Left cardiac atrium (tissue), 4 donors: ENCODE measurements at regions of chr5 and their contacts with region 1.

Region 1: DNA sequence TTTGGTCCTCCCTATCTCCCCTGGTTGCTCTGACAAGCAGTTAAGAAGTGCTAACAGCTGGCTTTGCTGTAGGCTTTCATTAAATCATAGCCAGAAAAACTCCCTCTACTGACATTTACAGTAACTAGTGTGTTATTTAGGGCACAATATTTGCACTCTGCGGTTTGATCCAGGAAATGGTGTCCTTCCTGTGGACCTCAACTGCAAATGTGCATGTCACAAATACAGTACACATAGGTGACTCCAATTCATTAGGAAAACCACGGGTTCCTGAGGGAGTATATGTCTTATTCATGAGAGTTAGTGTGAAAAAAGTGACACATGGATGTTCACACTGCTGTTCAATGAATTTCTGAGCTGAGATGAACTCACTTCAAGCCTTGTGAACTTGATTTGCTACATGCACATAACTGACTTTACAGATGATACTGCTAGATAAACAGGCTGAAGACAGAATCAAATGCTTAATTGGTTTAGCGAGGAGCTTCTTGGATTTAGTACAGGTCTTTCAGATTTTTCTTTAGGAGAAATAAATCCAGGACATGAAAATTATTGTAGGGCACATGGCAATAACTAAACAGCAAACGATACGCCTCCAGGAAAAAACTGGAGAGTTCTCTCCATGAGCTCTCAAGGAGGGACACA is 281.5 kb downstream of the EFNA5 start:
- DNase-seq: no peak
- ATAC-seq: peak; percentile 72 to 77

Region 2: DNA sequence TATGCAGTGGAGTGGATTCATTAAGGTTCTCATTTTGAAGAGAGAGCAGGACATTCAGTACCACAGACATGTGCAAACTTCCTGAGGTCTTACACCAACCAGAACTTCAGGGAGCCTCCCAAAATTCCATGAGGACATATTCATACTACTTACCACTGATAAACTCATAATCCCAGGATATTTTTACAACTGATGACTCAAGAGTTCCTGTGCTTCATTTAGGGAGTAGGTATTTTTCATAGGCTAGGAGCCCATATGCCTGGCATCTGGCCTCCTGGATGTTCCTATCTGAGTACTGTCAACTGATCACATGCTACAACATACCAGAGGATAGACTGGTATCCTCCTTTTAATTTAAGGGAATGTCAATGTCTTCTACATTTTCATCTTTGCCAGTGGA is 296.6 kb before region 1 on chr5:
- intact Hi-C with region 1: no loop called
- DNase-seq: no peak
- ATAC-seq: no peak

Region 3: GRCh38 chr5:107571621-107572536 is 182.6 kb after region 1 on chr5:
- intact Hi-C with region 1: loop called in 1 of 2 experiments (anchors 10 kb)
- DNase-seq: peak; percentile 91
- ATAC-seq: peak; percentile 88 to 94